ENCODE measurements at regions of chr21 and their contacts with region 1.

Region 1: DNA sequence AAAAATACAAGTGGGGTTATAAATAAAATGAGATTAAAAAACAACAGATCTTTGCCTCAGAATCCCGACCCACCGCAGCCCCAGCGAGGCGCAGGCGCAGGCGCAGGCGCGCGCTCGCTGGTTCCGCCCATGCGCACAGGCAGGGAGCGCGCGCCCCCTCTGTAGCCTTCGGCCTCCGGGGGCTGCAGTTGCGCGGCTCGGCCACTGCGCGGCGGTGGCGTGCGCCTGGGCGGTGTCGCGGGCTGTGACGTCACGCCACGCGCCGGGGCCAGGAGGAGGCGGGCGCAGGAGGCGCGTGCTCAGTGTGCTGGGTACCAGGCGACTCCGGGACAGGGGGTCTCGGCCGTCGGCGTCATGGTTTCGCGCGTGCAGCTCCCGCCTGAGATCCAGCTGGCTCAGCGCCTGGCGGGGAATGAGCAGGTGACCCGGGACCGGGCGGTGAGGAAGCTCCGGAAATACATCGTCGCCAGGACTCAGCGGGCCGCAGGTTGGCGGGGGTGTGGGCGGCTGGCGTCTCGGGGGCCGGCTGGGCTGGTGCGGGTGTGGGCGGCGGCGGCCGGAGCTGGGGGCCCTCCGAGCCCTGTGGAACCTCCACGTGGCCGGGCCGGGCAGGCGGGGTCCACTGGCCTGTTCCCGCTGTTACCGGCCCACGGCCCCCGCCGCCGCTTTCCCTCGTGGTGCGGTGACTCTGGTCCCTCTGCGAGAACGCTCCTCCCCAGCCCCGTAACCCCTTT is at the start of gene RRP1:
- ATAC-seq: peak; percentile 85 to 94 (median 90)
- H3K4me3 ChIP-seq: peak within 1 kb of the TSS; percentile 51 to 84 (median 66)
- H3K27ac ChIP-seq: peak within 1 kb of the TSS; percentile 48 to 85
- H3K4me1 ChIP-seq: peaks cover 4 to 6% of the 10 kb centered on the region in 2 donors
- total RNA-seq, gene RRP1: 11.0 to 38.4 (median 18.3) TPM

Region 2: GRCh38 chr21:43697758-43698643 is 91.4 kb before region 1 on chr21:
- in situ Hi-C with region 1: loop called in 1 of 9 experiments (anchors 25 kb)
- ATAC-seq: no peak
- H3K4me3 ChIP-seq: no peak overlapping the region
- H3K27ac ChIP-seq: no peak overlapping the region
- H3K4me1 ChIP-seq: peaks cover 13% of the 10 kb centered on the region in 2 donors

Region 3: GRCh38 chr21:43959231-43960116 is 170.0 kb after region 1 on chr21:
- in situ Hi-C with region 1: loop called in 1 of 9 experiments (anchors 10 kb)
- ATAC-seq: no peak
- H3K4me3 ChIP-seq: no peak overlapping the region
- H3K27ac ChIP-seq: no peak overlapping the region
- H3K4me1 ChIP-seq: peaks cover 0 to 2% of the 10 kb centered on the region in 2 donors